GM12878 (cell line): ENCODE measurements at regions of chr2 and their contacts with region 1.

Region 1: DNA sequence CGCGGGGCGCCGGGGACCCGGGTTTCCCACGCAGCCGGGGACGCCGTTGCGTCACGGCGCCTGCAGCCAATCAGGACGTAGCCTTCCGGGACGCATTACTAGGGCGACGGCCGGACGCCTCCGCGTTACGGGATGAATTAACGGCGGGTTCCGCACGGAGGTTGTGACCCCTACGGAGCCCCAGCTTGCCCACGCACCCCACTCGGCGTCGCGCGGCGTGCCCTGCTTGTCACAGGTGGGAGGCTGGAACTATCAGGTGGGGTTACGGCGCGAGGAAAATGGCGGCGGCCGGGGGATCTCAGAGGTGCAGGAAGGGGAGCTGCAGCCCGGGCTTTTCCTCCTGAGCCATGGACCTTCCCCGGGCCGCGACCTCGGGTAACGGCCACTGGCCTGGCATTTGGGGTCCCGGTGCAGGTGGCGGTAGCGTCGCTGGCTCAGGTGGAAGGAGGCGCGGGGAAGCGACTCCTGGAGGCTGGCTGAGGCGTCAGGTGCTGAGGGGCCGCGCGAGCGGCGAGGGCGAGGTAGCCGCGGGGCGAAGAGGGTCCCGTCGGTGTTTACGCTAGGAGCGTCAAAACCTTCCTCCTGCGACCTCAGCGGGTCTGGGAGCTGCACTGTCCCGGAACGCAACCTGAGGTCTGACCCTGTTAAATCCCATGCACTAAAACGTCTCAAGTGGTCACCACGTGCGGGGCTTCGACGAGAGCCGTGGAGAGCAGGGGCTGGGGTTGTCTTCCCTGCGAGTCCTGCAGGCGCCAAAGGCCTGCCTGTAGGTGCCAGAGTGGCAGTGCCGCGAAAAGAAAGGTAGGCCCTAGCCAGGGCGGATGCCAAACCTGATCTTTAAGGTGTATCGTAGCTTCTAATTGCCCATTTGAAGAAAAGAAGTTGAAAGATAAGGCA is at the start of gene LCLAT1:
- DNase-seq: peak; percentile 44
- ATAC-seq: peak; percentile 95
- H3K4me3 ChIP-seq: peak within 1 kb of the TSS; percentile 93
- H3K27ac ChIP-seq: peak within 1 kb of the TSS; percentile 77
- H3K4me1 ChIP-seq: no peaks in the 10 kb centered on the region; the same call in 1 of the 2 replicates
- H3K27me3 ChIP-seq: no peaks in the 10 kb centered on the region
- CTCF ChIP-seq: no peak; a peak in 1 of 6 replicates
- EP300 ChIP-seq: no peak
- POLR2A ChIP-seq: peak; percentile 84
- RAD21 ChIP-seq: no peak
- polyA plus RNA-seq, gene LCLAT1: 8.1 to 33.0 TPM

Region 2: GRCh38 chr2:30412971-30413570 is 34.3 kb before region 1 on chr2:
- CTCF ChIA-PET with region 1: no interaction called
- POLR2A ChIA-PET with region 1: no interaction called
- RAD21 ChIA-PET with region 1: no interaction called
- SMC1A ChIA-PET with region 1: no interaction called
- in situ Hi-C with region 1: no loop called
- intact Hi-C with region 1: no loop called
- DNase-seq: no peak
- ATAC-seq: no peak
- H3K4me3 ChIP-seq: no peak overlapping the region
- H3K27ac ChIP-seq: no peak overlapping the region
- H3K4me1 ChIP-seq: peaks cover 8% of the 10 kb centered on the region; the same call in 1 of the 2 replicates
- H3K27me3 ChIP-seq: no peaks in the 10 kb centered on the region
- CTCF ChIP-seq: no peak
- EP300 ChIP-seq: no peak
- POLR2A ChIP-seq: no peak
- RAD21 ChIP-seq: no peak

Region 3: DNA sequence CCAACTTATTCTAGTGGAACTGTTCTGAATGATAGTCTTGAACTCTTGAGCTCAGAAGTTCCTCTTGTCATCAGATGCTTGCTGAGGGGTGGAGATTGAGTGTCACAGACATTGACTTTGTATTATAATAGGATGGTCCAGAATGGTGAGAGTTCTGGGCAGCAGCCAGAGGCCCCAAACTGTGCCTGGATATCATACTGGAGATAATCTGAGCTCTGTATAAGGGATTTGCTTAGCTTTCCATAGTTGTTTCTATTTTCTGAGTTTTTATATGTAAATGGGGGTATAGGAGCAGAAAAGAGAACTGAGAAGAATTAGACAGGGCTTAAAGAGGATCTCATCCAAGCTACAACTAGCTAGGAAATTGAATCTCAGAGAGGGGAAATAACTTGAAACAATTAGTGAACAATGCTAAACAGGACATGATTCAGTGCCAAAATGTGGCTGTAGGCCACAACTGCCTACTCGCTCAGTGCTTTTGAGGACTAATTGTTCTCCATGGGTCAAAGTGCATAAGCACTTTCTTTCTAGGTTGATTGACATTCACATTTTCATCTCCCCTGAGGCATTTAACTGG is 10.4 kb before region 1 on chr2:
- CTCF ChIA-PET with region 1: interaction called, 5 read pairs
- POLR2A ChIA-PET with region 1: interaction called, 4 read pairs
- RAD21 ChIA-PET with region 1: interaction called, 4 read pairs
- SMC1A ChIA-PET with region 1: interaction called, 20 read pairs
- in situ Hi-C with region 1: no loop called
- intact Hi-C with region 1: no loop called
- DNase-seq: no peak
- ATAC-seq: peak; percentile 64
- H3K4me3 ChIP-seq: no peak overlapping the region
- H3K27ac ChIP-seq: no peak overlapping the region
- H3K4me1 ChIP-seq: peaks cover 2% of the 10 kb centered on the region; the same call in 1 of the 2 replicates
- H3K27me3 ChIP-seq: no peaks in the 10 kb centered on the region
- CTCF ChIP-seq: no peak
- EP300 ChIP-seq: no peak
- POLR2A ChIP-seq: no peak
- RAD21 ChIP-seq: no peak

Region 4: DNA sequence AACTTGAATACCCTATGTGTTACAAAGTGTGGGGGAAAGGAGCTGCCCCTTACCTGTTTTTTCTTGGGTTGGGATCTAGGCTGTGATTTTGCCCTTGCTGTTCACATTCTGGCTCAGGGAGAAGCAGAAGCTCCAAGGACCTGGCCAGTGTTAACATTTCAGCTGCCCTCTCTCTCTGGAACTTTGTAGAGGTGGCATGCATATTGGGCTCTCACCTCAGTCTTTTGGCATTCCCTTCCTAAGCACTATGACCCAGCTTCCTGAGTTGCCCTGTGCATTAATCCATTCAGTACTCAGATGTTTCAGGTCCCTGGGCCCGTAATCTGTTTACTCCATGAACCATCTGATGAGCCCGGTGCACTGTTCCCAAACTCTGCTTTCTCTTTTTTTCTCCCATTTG is 11.7 kb after region 1 on chr2:
- CTCF ChIA-PET with region 1: interaction called, 6 read pairs
- POLR2A ChIA-PET with region 1: interaction called, 3 read pairs
- RAD21 ChIA-PET with region 1: no interaction called
- SMC1A ChIA-PET with region 1: interaction called, 17 read pairs
- in situ Hi-C with region 1: no loop called
- intact Hi-C with region 1: no loop called
- DNase-seq: no peak
- ATAC-seq: no peak
- H3K4me3 ChIP-seq: no peak overlapping the region
- H3K27ac ChIP-seq: no peak overlapping the region
- H3K4me1 ChIP-seq: peaks cover 3% of the 10 kb centered on the region; the same call in 1 of the 2 replicates
- H3K27me3 ChIP-seq: no peaks in the 10 kb centered on the region
- CTCF ChIP-seq: no peak
- EP300 ChIP-seq: no peak
- POLR2A ChIP-seq: no peak
- RAD21 ChIP-seq: no peak

Region 5: GRCh38 chr2:30499681-30500080 is 52.3 kb after region 1 on chr2:
- CTCF ChIA-PET with region 1: no interaction called
- POLR2A ChIA-PET with region 1: no interaction called
- RAD21 ChIA-PET with region 1: no interaction called
- SMC1A ChIA-PET with region 1: no interaction called
- in situ Hi-C with region 1: no loop called
- intact Hi-C with region 1: no loop called
- DNase-seq: no peak
- ATAC-seq: no peak
- H3K4me3 ChIP-seq: no peak overlapping the region
- H3K27ac ChIP-seq: no peak overlapping the region
- H3K4me1 ChIP-seq: peaks cover 1% of the 10 kb centered on the region
- H3K27me3 ChIP-seq: no peaks in the 10 kb centered on the region
- CTCF ChIP-seq: no peak
- EP300 ChIP-seq: no peak
- POLR2A ChIP-seq: no peak
- RAD21 ChIP-seq: no peak